Heart left ventricle (tissue), 16 donors: ENCODE measurements at regions of chr11 and their contacts with region 1.

Region 1: GRCh38 chr11:12673924-12674570 is at the start of gene TEAD1:
- DNase-seq: peak; percentile 96 to 98 (median 97)
- ATAC-seq: peak; percentile 89 to 97 (median 95)
- H3K4me3 ChIP-seq: peak within 1 kb of the TSS; percentile 64 to 92 (median 72)
- H3K27ac ChIP-seq: peak within 1 kb of the TSS; percentile 84 to 98 (median 96)
- H3K4me1 ChIP-seq: peaks cover 3 to 37% (median 24%) of the 10 kb centered on the region in 12 donors
- H3K27me3 ChIP-seq: peaks cover 0 to 44% (median 0%) of the 10 kb centered on the region in 9 donors
- CTCF ChIP-seq: no peak
- POLR2A ChIP-seq: peak in 1 of 2 donors; percentile 77
- total RNA-seq, gene TEAD1: 89.8 to 161 (median 116) TPM

Region 2: DNA sequence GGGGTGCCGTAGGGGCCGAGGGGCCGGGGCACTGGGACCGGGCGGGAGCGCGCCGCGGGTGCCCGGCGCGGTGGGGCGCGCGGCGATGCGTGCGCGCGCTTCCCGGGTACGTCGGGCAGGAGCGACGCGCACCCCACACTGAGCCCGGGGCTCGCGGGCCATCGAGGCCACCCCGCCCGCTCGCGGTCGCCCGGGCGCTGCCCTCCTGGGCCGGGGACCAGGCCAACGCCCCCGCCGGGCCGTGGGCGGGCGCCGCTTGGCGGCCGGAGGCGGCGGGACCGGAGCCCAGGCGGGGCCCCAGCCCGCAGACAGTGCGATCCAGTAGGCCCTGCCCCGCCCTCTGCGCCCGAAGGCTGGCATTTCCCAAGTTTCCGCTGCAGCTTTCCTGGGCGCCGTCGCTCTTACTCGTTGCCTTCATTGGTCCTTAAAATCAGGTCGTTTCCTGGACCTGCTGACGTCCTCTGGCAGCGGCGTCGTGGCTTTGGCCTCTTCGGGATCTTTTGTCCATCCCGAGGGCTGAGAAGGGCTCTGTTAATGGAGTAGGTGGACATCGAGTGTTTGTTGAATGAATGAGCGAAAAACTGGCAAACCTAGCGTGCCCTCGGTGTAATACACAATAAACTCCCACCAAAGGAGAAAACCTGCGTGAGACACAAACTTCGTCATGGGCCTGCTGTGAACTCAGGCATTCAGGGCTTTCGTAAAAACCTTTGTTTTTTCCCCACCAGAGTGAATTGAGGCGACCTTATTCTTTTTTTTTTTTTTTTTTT is 296.0 kb before region 1 on chr11:
- intact Hi-C with region 1: loop called in 1 of 10 experiments (anchors 5 kb)
- DNase-seq: peak; percentile 65 to 85 (median 77)
- ATAC-seq: peak; percentile 21 to 82 (median 66)
- H3K4me3 ChIP-seq: peak overlapping the region; percentile 59 to 98 (median 72)
- H3K27ac ChIP-seq: peak overlapping the region; percentile 93 to 99 (median 97)
- H3K4me1 ChIP-seq: peaks cover 1 to 68% (median 37%) of the 10 kb centered on the region in 12 donors
- H3K27me3 ChIP-seq: peaks cover 0 to 11% (median 0%) of the 10 kb centered on the region in 9 donors
- CTCF ChIP-seq: peak in 8 of 12 donors; percentile 14 to 51 (median 28)
- POLR2A ChIP-seq: no peak

Region 3: GRCh38 chr11:12478743-12479142 is 195.3 kb before region 1 on chr11:
- intact Hi-C with region 1: no loop called
- DNase-seq: peak in 4 of 5 donors; percentile 35 to 56 (median 50)
- ATAC-seq: peak; percentile 16 to 59 (median 51)
- H3K4me3 ChIP-seq: no peak overlapping the region
- H3K27ac ChIP-seq: peak overlapping the region in 7 of 12 donors; percentile 5 to 69 (median 48)
- H3K4me1 ChIP-seq: peaks cover 0 to 27% (median 12%) of the 10 kb centered on the region in 12 donors
- H3K27me3 ChIP-seq: no peaks in the 10 kb centered on the region
- CTCF ChIP-seq: no peak
- POLR2A ChIP-seq: no peak

Region 4: GRCh38 chr11:12524865-12525264 is 149.2 kb before region 1 on chr11:
- intact Hi-C with region 1: no loop called
- DNase-seq: no peak
- ATAC-seq: peak in 1 of 4 donors; percentile 19
- H3K4me3 ChIP-seq: no peak overlapping the region
- H3K27ac ChIP-seq: peak overlapping the region in 1 of 12 donors; percentile 68
- H3K4me1 ChIP-seq: peaks cover 0 to 14% (median 3%) of the 10 kb centered on the region in 12 donors
- H3K27me3 ChIP-seq: no peaks in the 10 kb centered on the region
- CTCF ChIP-seq: no peak
- POLR2A ChIP-seq: no peak

Region 5: DNA sequence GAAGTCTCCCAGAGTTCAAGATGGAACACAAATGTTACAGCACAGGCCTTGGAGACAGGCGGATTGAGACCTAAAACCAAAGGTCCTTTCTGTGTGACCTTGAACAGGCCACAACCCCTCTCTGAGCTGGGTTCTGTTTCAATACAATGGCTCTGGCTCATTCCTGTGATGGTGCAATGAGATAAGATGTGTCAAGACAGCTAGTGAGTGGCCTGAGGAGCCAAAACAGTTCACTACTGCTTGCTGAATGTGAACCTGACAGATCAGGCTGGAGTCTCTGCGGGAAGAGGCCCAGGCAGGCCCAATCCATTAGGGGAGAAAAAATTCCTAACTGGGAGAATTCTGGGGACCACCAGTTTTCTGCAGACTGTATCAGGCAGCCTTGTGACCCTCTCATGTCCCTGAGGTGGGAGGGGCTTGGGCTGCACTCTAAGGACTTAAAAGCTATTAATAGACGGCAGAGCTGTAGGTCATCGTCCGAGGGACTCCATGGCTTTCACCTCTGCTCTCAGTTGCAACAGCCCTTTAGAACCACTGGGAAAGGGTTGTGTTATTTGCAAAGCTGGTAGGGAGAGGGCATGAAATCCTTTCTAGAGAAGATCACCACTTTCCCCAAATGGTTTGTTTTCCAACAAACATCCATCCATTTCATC is 125.9 kb before region 1 on chr11:
- intact Hi-C with region 1: loop called in 2 of 10 experiments (anchors 2 to 10 kb)
- DNase-seq: peak in 4 of 5 donors; percentile 33 to 68 (median 54)
- ATAC-seq: peak; percentile 69 to 86 (median 76)
- H3K4me3 ChIP-seq: no peak overlapping the region
- H3K27ac ChIP-seq: peak overlapping the region in 2 of 12 donors; percentile 2 to 53
- H3K4me1 ChIP-seq: peaks cover 0 to 24% (median 7%) of the 10 kb centered on the region in 12 donors
- H3K27me3 ChIP-seq: no peaks in the 10 kb centered on the region
- CTCF ChIP-seq: no peak
- POLR2A ChIP-seq: no peak

Region 6: GRCh38 chr11:12693479-12694181 is 19.6 kb after region 1 on chr11:
- intact Hi-C with region 1: loop called in 4 of 10 experiments (anchors 2 kb)
- DNase-seq: peak in 4 of 5 donors; percentile 31 to 67 (median 62)
- ATAC-seq: peak; percentile 68 to 86 (median 82)
- H3K4me3 ChIP-seq: peak overlapping the region in 9 of 12 donors; percentile 8 to 37 (median 21)
- H3K27ac ChIP-seq: peak overlapping the region; percentile 59 to 92 (median 89)
- H3K4me1 ChIP-seq: peaks cover 22 to 88% (median 64%) of the 10 kb centered on the region in 12 donors
- H3K27me3 ChIP-seq: peaks cover 0 to 15% (median 0%) of the 10 kb centered on the region in 9 donors
- CTCF ChIP-seq: no peak
- POLR2A ChIP-seq: peak in 1 of 2 donors; percentile 35

Region 7: GRCh38 chr11:12813371-12814225 is 139.6 kb after region 1 on chr11:
- intact Hi-C with region 1: loop called in 6 of 10 experiments (anchors 5 to 10 kb)
- DNase-seq: peak in 3 of 5 donors; percentile 26 to 54 (median 53)
- ATAC-seq: peak in 3 of 4 donors; percentile 27 to 47 (median 39)
- H3K4me3 ChIP-seq: no peak overlapping the region
- H3K27ac ChIP-seq: peak overlapping the region in 10 of 12 donors; percentile 4 to 76 (median 47)
- H3K4me1 ChIP-seq: peaks cover 3 to 67% (median 49%) of the 10 kb centered on the region in 12 donors
- H3K27me3 ChIP-seq: no peaks in the 10 kb centered on the region
- CTCF ChIP-seq: no peak
- POLR2A ChIP-seq: no peak